Ascending aorta (tissue), 2 donors: ENCODE measurements at regions of chr22 and their contacts with region 1.

Region 1: DNA sequence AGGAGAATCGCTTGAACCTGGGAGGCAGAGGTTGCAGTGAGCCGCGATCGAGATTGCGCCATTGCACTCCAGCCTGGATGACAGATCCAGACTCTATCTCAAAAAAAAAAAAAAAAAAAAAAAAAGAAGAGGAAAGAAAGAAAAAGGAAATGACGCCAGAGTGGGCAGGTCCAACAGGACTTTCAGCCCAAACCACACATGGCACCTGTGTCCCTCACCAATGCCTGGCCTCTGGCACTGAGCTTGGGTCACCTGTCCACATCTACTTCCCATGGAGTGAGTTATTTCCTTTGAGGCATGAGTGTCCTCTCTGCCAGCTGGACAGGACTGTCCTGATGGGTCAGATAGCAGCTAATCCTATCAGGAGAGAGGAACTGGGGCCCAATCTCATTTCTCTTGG is 15.2 kb upstream of the GCAT start:
- DNase-seq: no peak
- H3K4me3 ChIP-seq: no peak overlapping the region
- H3K27ac ChIP-seq: no peak overlapping the region
- H3K4me1 ChIP-seq: no peaks in the 10 kb centered on the region
- H3K27me3 ChIP-seq: no peaks in the 10 kb centered on the region
- CTCF ChIP-seq: no peak

Region 2: DNA sequence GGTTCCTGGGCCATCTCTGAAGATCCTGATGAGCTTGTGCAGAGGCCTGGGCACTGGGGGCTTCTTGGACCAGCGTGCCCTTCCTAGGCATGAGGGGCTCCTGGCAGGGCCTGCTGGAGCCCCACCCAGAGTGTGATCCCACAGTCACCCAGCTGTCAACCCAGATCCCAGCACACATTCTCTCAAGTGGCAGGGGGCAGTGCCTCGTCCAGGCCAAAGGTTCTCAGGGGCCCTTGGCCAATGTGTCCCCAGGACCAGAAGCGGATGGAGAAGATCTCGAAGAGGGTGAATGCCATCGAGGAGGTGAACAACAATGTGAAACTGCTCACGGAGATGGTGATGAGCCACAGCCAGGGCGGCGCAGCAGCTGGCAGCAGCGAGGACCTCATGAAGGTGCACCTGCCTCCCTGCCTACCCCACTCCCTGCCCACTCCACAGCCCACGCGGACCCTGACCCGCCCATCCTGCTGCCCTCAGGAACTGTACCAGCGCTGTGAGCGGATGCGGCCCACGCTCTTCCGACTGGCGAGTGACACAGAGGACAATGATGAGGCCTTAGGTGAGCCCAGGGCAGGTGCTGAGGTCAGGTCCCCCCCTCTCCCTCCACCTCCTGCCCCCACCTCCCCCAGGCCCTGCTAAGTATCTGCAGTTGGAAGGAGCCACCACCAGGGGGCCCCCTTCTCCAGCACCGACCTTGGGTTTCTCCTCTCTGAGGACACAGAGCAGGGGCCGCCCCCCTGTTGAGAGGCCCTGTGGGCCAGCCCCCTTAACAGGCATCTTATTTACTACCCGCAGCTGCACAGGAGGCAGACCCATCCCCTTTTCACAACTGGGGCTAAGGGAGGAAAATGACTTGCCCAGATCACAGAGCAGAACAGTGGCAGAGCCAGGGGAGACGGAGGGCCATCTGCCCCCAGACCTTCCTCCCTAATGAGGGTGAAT is 169.1 kb before region 1 on chr22:
- intact Hi-C with region 1: loop called (anchors 5 kb)
- DNase-seq: peak in 1 of 2 donors; percentile 83
- H3K4me3 ChIP-seq: no peak overlapping the region
- H3K27ac ChIP-seq: peak overlapping the region in 1 of 2 donors; percentile 36
- H3K4me1 ChIP-seq: peaks cover 0 to 16% of the 10 kb centered on the region in 2 donors
- H3K27me3 ChIP-seq: no peaks in the 10 kb centered on the region
- CTCF ChIP-seq: peak; percentile 34 to 94 (median 94)

Region 3: GRCh38 chr22:37643225-37643847 is 149.2 kb before region 1 on chr22:
- intact Hi-C with region 1: loop called (anchors 1 kb)
- DNase-seq: peak in 1 of 2 donors; percentile 91
- H3K4me3 ChIP-seq: no peak overlapping the region
- H3K27ac ChIP-seq: no peak overlapping the region
- H3K4me1 ChIP-seq: peaks cover 6 to 17% of the 10 kb centered on the region in 2 donors
- H3K27me3 ChIP-seq: no peaks in the 10 kb centered on the region
- CTCF ChIP-seq: peak; percentile 91 to 93 (median 92)

Region 4: DNA sequence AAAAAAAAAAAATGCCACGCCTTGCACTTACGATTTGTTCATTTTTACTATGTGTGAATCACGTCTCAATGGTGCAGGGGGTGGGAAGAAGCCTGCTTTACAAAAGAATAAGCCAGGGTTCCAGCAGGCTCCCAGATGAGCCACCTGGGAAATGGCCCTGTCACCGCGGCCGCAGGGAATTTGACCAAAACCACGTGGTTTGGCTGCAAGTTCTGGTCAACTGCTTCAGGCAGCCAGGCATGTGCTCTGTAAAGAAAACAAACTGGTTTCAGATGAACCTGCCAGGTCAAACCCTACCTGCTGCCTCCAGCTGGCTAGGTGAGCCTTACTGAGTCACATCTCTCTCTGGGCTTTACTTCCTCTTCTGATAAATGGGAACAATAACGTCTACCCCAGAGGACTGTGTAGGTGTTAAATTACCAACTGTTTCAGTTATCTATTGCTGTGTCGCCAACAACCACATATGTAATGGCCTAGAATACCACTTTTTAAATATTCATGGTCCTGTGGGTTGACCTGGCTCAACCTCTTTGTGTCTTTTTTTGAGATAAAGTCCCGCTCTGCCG is 15.3 kb before region 1 on chr22:
- intact Hi-C with region 1: no loop called
- DNase-seq: no peak
- H3K4me3 ChIP-seq: no peak overlapping the region
- H3K27ac ChIP-seq: no peak overlapping the region
- H3K4me1 ChIP-seq: peaks cover 0 to 4% of the 10 kb centered on the region in 2 donors
- H3K27me3 ChIP-seq: no peaks in the 10 kb centered on the region
- CTCF ChIP-seq: no peak